ENCODE measurements at regions of chr15 and their contacts with region 1.

Region 1: DNA sequence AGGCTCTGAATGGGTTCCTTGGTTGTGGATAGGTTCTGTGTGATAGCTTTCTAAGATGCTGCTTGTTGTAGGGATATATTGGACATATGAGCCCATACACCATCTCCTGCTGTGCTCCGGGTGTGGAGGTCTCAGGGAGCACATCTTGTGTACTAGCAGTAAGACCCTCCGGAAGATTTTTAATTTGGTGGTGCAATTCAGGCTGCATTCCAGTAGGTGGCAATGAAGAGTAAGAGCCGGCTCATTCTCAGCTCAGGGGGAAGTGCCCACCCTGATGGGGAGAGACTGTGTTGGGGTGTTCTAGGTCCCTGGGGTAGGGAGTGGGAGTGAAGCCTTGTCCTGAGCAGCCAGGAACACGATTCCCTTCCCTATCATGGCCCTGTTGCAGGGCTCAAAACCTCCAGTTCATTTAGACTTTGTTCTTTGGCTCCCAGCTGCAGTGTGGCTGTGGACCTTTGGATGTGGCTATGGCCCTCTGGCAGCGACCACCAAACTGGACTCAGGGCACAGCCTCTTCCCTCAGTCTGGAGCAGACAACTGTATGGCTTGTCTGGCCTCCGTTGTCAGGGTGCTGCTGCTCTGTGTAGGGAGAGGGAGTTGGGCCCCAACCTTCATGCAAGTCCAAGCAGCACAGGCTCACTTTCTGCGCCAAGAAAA is 104.7 kb downstream of the UNC13C start:
- DNase-seq: no peak

Region 2: DNA sequence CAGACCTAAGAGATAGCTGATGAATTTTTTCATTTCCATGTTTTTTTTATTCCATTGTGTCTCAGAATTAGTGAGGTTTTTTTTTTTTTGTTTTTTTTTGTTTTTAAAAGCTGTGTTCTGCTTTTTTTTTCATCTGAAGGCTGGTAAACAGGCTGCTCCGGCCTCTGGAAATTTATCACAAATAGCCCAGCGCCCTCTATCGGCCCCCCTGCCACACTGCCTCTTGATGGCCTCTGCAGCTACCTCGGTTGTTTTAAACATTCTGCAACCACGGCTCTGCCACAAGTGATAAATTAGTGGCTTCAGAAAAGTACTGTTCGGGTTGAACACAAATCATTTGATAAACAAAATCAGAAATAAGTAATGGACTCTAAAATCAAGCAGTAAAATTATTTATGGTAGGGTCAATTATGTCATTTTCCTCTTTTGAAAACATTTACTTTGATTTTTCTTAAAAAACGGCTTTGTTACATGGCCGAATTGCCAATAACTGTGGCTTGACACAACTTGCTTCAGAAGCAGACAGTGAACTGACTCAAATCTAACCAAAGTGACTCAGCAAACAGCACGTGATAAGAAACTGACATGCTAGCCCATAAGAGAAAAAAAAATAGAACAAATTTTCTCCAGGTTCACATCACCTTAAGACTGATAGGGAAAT is 1026.0 kb after region 1 on chr15:
- intact Hi-C with region 1: loop called (anchors 10 kb)
- DNase-seq: no peak

Measured in cardiac septum (tissue), 1 donor.